CD14-positive monocyte (primary cell): ENCODE measurements at regions of chrX and their contacts with region 1.

Region 1: GRCh38 chrX:118751950-118752783 is 24.8 kb downstream of the IL13RA1 start:
- DNase-seq: peak; percentile 76 to 86 (median 84)
- H3K4me3 ChIP-seq: peak overlapping the region in 1 of 3 experiments; percentile 25
- H3K4me3 Mint-ChIP-seq: peak overlapping the region; percentile 7 to 60
- H3K27ac ChIP-seq: peak overlapping the region; percentile 44 to 87
- H3K27ac Mint-ChIP-seq: peak overlapping the region; percentile 77 to 96 (median 82)
- H3K4me1 ChIP-seq: peaks cover 47% of the 10 kb centered on the region in 2 donors
- H3K4me1 Mint-ChIP-seq: peaks cover 44% of the 10 kb centered on the region
- H3K27me3 ChIP-seq: no peaks in the 10 kb centered on the region
- H3K27me3 Mint-ChIP-seq: peaks cover 0 to 14% (median 0%) of the 10 kb centered on the region in 3 donors
- CTCF ChIP-seq: no peak

Region 2: GRCh38 chrX:118698516-118699170 is 53.5 kb before region 1 on chrX:
- intact Hi-C with region 1: loop called in 1 of 2 experiments (anchors 10 kb)
- DNase-seq: peak; percentile 79 to 92 (median 84)
- H3K4me3 ChIP-seq: peak overlapping the region in 2 of 3 experiments; percentile 2 to 49
- H3K4me3 Mint-ChIP-seq: peak overlapping the region; percentile 62 to 82
- H3K27ac ChIP-seq: peak overlapping the region; percentile 48 to 83
- H3K27ac Mint-ChIP-seq: peak overlapping the region; percentile 89 to 98 (median 93)
- H3K4me1 ChIP-seq: peaks cover 46 to 53% of the 10 kb centered on the region in 2 donors
- H3K4me1 Mint-ChIP-seq: peaks cover 38% of the 10 kb centered on the region
- H3K27me3 ChIP-seq: no peaks in the 10 kb centered on the region
- H3K27me3 Mint-ChIP-seq: peaks cover 0 to 7% (median 0%) of the 10 kb centered on the region in 3 donors
- CTCF ChIP-seq: no peak

Region 3: DNA sequence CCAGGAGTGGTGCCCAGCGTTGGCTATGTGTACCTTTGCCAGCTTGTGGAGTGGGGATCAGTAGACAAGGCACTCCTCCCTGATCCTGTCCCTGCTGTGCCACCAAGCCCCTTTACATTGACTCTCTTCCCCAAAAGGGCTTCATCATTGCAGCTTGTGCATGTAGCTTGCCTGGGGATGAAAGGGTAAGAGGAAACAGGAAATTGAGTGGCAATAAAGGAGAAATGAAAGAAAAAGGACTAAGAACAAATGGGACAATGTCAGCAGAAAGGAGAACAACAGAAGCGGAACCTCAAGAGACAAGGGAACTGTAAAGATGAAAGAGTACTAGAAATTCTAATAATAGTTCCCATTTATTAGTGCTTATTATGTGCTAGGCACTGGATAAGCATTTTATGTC is 33.4 kb before region 1 on chrX:
- intact Hi-C with region 1: no loop called
- DNase-seq: peak; percentile 80 to 89 (median 84)
- H3K4me3 ChIP-seq: peak overlapping the region in 1 of 3 experiments; percentile 35
- H3K4me3 Mint-ChIP-seq: peak overlapping the region; percentile 43 to 78
- H3K27ac ChIP-seq: peak overlapping the region; percentile 95 to 97
- H3K27ac Mint-ChIP-seq: peak overlapping the region; percentile 97 to 100 (median 99)
- H3K4me1 ChIP-seq: peaks cover 81 to 82% of the 10 kb centered on the region in 2 donors
- H3K4me1 Mint-ChIP-seq: peaks cover 68% of the 10 kb centered on the region
- H3K27me3 ChIP-seq: no peaks in the 10 kb centered on the region
- H3K27me3 Mint-ChIP-seq: peaks cover 0 to 11% (median 0%) of the 10 kb centered on the region in 3 donors
- CTCF ChIP-seq: no peak

Region 4: GRCh38 chrX:118802857-118803256 is 50.7 kb after region 1 on chrX:
- intact Hi-C with region 1: no loop called
- DNase-seq: peak; percentile 42 to 66 (median 60)
- H3K4me3 ChIP-seq: no peak overlapping the region
- H3K4me3 Mint-ChIP-seq: no peak overlapping the region
- H3K27ac ChIP-seq: no peak overlapping the region
- H3K27ac Mint-ChIP-seq: peak overlapping the region in 4 of 7 donors; percentile 46 to 63 (median 52)
- H3K4me1 ChIP-seq: peaks cover 10 to 17% of the 10 kb centered on the region in 2 donors
- H3K4me1 Mint-ChIP-seq: peaks cover 22% of the 10 kb centered on the region
- H3K27me3 ChIP-seq: no peaks in the 10 kb centered on the region
- H3K27me3 Mint-ChIP-seq: peaks cover 0 to 6% (median 0%) of the 10 kb centered on the region in 3 donors
- CTCF ChIP-seq: no peak